Breast epithelium (tissue), 4 donors: ENCODE measurements at regions of chr9 and their contacts with region 1.

Region 1: DNA sequence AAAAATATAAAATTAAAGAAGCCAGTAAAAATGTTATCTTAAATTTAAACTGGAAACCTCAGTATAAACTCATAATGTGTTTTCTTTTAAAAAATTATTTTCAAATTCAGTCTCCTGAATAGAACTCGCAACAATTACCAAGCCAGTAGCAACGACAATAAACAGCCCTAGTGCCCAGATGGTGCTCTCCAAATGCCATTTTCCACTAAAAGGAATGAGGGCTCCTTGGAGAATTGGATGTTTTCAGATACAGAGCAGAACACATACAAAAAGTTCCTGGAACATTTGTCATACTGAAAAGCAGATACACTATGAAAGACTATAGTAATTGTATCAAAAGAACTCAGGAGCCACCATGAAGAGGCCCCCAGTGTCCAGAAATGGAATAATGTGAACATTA is 97.4 kb downstream of the TMC1 start:
- DNase-seq: no peak
- H3K4me3 ChIP-seq: no peak overlapping the region
- H3K27ac ChIP-seq: no peak overlapping the region
- H3K4me1 ChIP-seq: no peaks in the 10 kb centered on the region
- H3K27me3 ChIP-seq: no peaks in the 10 kb centered on the region
- CTCF ChIP-seq: no peak
- POLR2A ChIP-seq: no peak

Region 2: DNA sequence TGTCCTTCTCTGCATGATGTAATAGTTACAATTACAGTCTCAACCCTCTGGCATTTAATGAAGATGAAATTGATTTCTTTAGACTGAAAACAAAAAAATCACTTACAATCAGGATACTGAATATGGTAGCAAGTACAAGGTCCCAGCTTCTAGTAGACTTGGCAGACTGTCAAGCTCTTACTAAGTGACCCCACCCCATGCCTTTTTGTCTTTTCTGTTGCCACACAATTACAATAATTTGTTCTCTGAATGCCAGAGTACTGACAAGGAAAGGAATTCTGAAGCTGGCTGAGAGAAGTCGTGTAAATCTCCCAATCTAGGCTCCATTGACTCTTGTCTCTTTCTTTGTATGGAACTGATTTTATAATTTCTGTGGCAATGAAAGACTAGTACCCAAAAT is 56.8 kb after region 1 on chr9:
- intact Hi-C with region 1: loop called (anchors 2 kb)
- DNase-seq: no peak
- H3K4me3 ChIP-seq: no peak overlapping the region
- H3K27ac ChIP-seq: no peak overlapping the region
- H3K4me1 ChIP-seq: no peaks in the 10 kb centered on the region
- H3K27me3 ChIP-seq: no peaks in the 10 kb centered on the region
- CTCF ChIP-seq: no peak
- POLR2A ChIP-seq: no peak